Endothelial cell of umbilical vein (primary cell): ENCODE measurements at regions of chr6 and their contacts with region 1.

Region 1: DNA sequence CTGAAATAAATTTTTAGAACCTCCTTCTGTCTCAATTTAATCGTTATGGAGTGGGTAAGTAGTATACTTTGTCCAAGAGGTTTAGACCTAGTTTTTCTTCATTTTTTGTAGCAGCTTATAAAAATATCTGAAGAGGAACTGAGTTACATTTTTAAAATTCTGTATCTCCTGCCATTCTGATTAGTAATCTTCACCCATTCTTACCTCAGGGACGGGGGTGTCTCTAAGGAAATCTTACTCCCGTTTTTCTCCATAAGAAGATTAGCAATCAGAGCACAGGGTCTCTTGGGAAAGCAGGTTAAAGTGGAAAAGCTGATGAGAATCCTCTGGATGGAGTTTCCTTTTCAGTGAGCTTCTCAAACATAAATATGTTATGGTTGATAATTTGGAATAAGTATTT is 259.3 kb upstream of the FAM83B start:
- DNase-seq: no peak
- H3K4me3 ChIP-seq: no peak overlapping the region
- H3K27ac ChIP-seq: no peak overlapping the region
- H3K4me1 ChIP-seq: no peaks in the 10 kb centered on the region
- H3K27me3 ChIP-seq: no peaks in the 10 kb centered on the region
- CTCF ChIP-seq: no peak
- POLR2A ChIP-seq: no peak

Region 2: DNA sequence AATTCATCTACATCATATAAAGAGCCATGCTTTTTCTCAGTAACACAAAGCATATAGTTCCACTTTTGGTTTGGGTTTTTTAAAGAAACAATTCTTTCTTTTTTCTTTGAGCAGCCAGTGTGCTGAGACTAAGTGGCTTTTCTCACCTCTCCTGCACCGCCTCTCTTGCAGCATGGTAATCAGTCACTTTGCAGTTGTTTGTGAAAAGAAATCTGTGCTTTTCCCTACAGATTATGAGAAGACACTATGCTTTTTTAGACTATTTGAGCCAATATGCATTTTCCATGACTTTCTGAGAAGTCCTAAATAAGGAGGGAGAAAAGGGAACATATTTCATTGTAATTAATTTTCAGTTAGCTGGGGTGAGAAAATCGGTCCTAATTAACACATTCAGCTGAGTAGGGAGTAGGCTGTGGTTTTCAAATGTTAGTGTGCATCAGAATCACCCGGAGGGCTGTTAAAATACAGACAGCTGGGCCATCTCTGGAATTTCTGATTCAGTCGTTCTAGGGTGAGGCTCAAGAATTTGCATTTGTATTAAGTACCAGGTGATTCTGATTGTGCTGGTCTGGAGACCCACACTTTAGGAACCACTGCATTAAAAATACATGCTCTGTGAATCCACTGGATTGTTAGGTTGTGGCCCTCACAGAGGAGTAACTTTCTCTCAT is 123.8 kb before region 1 on chr6:
- CTCF ChIA-PET with region 1: no interaction called
- POLR2A ChIA-PET with region 1: no interaction called
- dilution Hi-C with region 1: no loop called
- intact Hi-C with region 1: no loop called
- DNase-seq: no peak
- H3K4me3 ChIP-seq: no peak overlapping the region
- H3K27ac ChIP-seq: no peak overlapping the region
- H3K4me1 ChIP-seq: peaks cover 2% of the 10 kb centered on the region
- H3K27me3 ChIP-seq: no peaks in the 10 kb centered on the region
- CTCF ChIP-seq: no peak
- POLR2A ChIP-seq: no peak

Region 3: GRCh38 chr6:54598787-54599309 is 11.6 kb after region 1 on chr6:
- CTCF ChIA-PET with region 1: interaction called, 11 read pairs
- POLR2A ChIA-PET with region 1: no interaction called
- dilution Hi-C with region 1: no loop called
- intact Hi-C with region 1: no loop called
- DNase-seq: no peak
- H3K4me3 ChIP-seq: no peak overlapping the region
- H3K27ac ChIP-seq: no peak overlapping the region
- H3K4me1 ChIP-seq: no peaks in the 10 kb centered on the region
- H3K27me3 ChIP-seq: no peaks in the 10 kb centered on the region
- CTCF ChIP-seq: no peak
- POLR2A ChIP-seq: no peak